Right cardiac atrium (tissue), 5 donors: ENCODE measurements at regions of chr2 and their contacts with region 1.

Region 1: DNA sequence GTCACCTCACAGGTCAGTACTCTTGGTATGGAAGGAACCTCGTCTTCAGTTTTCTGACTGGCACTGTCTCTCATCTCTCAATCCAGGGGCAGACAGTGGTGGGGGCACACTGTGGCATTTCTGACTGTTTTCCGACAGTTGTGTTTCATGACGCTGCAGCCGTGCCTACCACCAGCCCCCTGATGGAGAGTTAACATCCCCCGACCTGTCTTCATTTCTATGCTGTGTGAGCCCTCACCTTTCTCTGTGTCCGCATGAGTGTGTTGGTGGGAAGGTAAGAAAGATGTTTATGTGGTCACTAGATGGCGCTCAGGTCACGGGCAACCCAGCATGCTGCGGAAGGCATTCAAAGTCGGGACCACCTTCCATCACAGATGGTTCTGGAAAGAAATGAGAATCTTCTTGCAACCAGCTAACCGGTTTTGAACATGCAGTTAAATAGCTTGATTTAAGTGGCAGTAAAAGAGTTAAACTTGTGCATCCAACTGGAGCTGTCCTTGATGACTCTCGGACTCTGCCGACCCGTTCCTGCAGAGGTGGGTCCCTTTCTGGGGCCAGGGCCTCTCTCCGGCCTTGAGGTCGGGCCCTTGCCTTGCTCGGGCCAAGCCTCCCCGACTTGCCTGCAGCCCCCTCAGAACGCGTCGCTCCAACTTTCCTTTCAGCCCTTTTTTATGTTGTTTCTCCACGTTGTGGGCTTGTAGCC is 92.4 kb downstream of the DYSF start:
- DNase-seq: peak in 2 of 3 donors; percentile 61 to 74
- ATAC-seq: peak; percentile 66 to 75
- H3K4me3 ChIP-seq: no peak overlapping the region
- H3K27ac ChIP-seq: peak overlapping the region; percentile 50
- H3K4me1 ChIP-seq: no peaks in the 10 kb centered on the region
- H3K27me3 ChIP-seq: no peaks in the 10 kb centered on the region

Region 2: DNA sequence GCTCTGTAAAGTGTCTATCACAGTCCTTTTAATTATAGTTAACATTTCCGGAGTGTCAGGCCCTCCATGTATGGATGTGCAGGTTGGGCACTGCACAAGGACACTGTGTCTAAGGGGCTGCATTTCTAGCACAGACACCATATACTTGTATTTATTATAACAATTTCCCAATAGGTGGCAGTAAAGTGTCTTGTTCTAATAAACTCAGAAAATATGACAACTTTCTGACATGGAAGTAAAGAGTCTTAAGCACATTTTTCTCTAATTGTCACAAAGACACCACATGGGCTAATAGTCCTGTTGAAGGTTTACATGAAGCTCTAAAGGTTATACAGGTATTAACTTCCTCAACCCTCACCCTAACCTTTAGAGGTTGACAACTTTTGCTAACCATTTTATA is 64.2 kb after region 1 on chr2:
- intact Hi-C with region 1: loop called in 1 of 4 experiments (anchors 10 kb)
- DNase-seq: no peak
- ATAC-seq: no peak
- H3K4me3 ChIP-seq: no peak overlapping the region
- H3K27ac ChIP-seq: no peak overlapping the region
- H3K4me1 ChIP-seq: peaks cover 12% of the 10 kb centered on the region
- H3K27me3 ChIP-seq: no peaks in the 10 kb centered on the region